ENCODE measurements at regions of chr11 and their contacts with region 1.

Region 1: DNA sequence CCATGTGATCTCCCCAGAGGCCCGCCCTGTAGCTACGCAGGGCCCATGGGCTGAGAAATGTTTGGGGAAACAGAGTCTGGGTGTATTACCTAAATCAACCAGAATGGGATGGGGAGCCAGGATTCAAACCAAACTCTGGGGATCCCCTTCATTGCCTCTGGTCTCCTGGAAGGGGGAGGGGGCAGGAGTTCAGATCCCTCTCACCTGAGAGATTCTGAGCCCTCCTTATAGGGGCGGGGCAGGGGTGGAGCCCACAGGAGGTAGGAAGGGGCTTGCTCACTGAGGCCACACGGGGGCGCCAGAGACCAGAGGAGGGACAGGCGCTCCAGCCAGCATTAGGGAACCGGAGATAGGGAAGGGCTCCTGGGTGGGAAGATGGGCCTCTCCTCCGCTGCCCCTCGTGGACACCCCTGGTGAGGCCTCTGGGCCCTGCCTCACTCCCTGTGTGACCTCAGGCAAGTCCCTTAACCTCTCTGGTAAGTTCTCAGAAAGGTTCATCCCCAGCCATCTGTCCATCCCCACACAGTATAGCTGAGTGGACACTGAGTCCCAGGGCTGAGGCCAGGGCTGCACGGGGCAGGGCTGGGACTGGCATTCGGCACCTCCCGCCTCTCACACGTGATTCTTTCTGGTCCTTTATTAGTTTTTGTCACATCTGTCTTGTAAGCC is 2.7 kb upstream of the CDC42BPG start:
- DNase-seq: peak; percentile 85 to 94 (median 90)
- H3K4me3 ChIP-seq: no peak overlapping the region
- H3K4me3 Mint-ChIP-seq: peak overlapping the region in 5 of 7 donors; percentile 33 to 81 (median 47)
- H3K27ac ChIP-seq: no peak overlapping the region
- H3K27ac Mint-ChIP-seq: peak overlapping the region; percentile 26 to 84 (median 75)
- H3K4me1 ChIP-seq: peaks cover 62% of the 10 kb centered on the region
- H3K4me1 Mint-ChIP-seq: peaks cover 52 to 68% (median 62%) of the 10 kb centered on the region in 3 donors
- H3K27me3 ChIP-seq: no peaks in the 10 kb centered on the region
- H3K27me3 Mint-ChIP-seq: no peaks in the 10 kb centered on the region

Region 2: DNA sequence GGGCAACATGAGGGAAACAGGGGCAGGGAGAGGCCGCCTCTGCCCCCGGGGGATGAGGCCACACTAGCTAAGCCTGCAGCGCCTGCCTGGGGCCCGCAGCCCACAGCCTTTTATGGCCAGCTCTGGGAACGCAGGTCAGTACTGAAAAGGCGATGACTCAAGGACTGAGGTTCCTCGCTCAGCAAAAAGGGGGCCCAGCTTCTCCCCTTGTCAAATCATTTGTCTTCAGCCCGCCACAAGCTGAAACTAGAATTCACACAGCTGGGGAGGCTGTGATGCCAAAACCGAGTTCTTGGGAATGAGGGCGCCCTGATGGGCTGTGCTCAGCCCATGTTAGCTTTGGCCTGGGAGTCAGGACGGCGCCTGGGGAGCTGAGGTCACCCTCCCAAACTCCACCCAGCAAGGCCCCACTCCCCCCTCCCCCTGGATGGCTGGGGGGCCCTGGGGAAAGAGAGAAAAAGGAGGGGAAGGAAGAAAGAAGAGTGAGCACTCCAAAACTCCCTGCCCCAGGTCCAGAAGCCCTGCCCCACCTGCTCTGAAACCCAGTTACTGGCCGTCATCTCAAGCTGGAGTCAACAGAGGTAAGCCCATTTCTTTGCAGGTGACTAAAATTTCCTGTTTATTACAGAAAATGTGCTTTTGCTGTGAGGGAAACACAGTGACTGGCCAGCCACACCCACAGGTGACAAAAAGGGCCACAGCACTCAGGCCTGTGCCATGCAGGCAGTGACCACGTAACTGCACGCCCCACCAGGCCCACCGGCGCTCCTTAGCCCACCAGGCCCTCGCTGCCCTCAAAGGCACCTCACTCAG is 17.5 kb after region 1 on chr11:
- CTCF ChIA-PET with region 1: interaction called, 318 read pairs
- POLR2A ChIA-PET with region 1: interaction called, 213 read pairs
- DNase-seq: no peak
- H3K4me3 ChIP-seq: peak overlapping the region; percentile 66
- H3K4me3 Mint-ChIP-seq: peak overlapping the region; percentile 76 to 91 (median 78)
- H3K27ac ChIP-seq: peak overlapping the region; percentile 75
- H3K27ac Mint-ChIP-seq: peak overlapping the region; percentile 80 to 99 (median 96)
- H3K4me1 ChIP-seq: peaks cover 100% of the 10 kb centered on the region
- H3K4me1 Mint-ChIP-seq: peaks cover 84 to 95% (median 91%) of the 10 kb centered on the region in 3 donors
- H3K27me3 ChIP-seq: no peaks in the 10 kb centered on the region
- H3K27me3 Mint-ChIP-seq: peaks cover 0 to 1% of the 10 kb centered on the region in 2 donors

Region 3: GRCh38 chr11:64878494-64879243 is 31.5 kb after region 1 on chr11 and contains the start of gene EHD1:
- CTCF ChIA-PET with region 1: interaction called, 1,256 read pairs
- POLR2A ChIA-PET with region 1: interaction called, 569 read pairs
- DNase-seq: peak; percentile 99 to 100 (median 100)
- H3K4me3 ChIP-seq: peak within 1 kb of the TSS; percentile 99
- H3K4me3 Mint-ChIP-seq: peak within 1 kb of the TSS; percentile 98 to 100 (median 99)
- H3K27ac ChIP-seq: peak within 1 kb of the TSS; percentile 86
- H3K27ac Mint-ChIP-seq: peak within 1 kb of the TSS; percentile 91 to 99 (median 98)
- H3K4me1 ChIP-seq: peaks cover 58% of the 10 kb centered on the region
- H3K4me1 Mint-ChIP-seq: peaks cover 59 to 67% (median 62%) of the 10 kb centered on the region in 3 donors
- H3K27me3 ChIP-seq: no peaks in the 10 kb centered on the region
- H3K27me3 Mint-ChIP-seq: peaks cover 0 to 10% of the 10 kb centered on the region in 2 donors
- total RNA-seq, gene EHD1: 102 to 110 TPM

Region 4: DNA sequence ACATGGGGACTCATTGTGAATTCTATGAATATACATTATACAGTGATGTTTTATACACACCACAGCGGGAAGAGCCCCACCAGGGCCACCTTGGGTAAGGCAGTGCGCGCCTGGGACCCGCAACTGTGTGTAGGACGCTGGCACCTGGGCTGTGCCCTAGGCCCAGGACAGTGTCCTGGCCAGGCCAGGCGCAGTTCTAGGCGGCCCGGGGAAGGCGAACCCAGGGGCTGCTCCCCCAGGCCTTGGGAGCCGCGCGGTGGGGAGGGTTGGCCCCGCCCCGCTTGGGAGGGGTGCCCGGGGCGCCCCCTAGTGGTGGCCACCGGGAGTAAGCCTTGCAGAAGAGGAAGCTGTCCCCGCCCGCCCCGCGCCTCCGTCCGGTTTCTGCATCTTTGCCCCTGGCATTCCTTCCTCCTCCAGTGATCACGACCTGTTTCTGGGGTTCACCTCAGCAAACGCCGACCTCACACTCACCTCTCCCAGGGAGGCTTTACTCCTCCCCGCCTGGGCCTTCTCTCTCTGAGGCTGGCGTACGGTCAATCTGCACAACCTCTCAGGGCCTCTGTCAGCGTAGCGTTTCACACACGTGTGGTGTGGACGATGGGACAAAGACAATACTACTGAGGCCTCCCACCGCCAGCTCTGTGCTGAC is 40.7 kb after region 1 on chr11:
- CTCF ChIA-PET with region 1: interaction called, 1,256 read pairs
- POLR2A ChIA-PET with region 1: interaction called, 569 read pairs
- DNase-seq: peak; percentile 78 to 89 (median 84)
- H3K4me3 ChIP-seq: peak overlapping the region; percentile 60
- H3K4me3 Mint-ChIP-seq: peak overlapping the region; percentile 35 to 87 (median 78)
- H3K27ac ChIP-seq: peak overlapping the region; percentile 75
- H3K27ac Mint-ChIP-seq: peak overlapping the region in 7 of 8 donors; percentile 26 to 95 (median 85)
- H3K4me1 ChIP-seq: peaks cover 29% of the 10 kb centered on the region
- H3K4me1 Mint-ChIP-seq: peaks cover 24 to 41% (median 24%) of the 10 kb centered on the region in 3 donors
- H3K27me3 ChIP-seq: no peaks in the 10 kb centered on the region
- H3K27me3 Mint-ChIP-seq: no peaks in the 10 kb centered on the region

Region 5: DNA sequence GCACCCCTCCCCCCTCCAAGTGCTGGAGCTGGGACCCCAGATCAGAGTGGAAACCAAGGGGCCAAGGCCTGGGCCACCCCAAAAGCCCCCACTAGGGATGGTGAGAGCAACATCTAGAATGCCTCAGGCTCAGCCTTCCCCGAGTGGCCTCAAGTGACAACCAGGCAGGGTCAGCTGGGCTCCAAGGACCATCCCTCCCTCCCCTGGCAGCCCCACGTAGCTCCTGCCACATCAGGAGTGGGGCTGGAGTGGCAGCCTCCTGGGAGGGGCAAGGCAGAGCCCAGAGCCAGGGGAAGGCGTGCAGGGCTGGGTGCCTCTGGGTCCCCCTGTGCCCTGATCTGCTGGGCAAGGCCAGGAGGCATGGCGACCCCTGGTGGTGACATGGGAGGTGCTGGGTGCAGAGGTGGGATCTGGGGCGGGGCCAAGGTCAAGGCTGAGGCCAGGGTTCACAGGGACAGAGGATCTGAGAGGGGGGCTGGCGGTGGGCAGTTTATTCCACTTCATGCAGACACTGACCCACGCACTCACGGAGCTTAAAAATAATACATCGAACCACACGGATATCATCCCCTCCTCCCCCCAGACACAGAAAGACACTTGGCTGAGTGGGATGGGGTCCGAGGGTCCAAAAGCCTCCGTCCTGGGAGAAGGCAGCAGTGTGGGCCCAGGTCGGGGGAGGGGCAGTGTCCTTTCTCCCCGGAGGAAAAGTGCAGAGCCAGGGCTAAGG is 47.1 kb after region 1 on chr11:
- CTCF ChIA-PET with region 1: interaction called, 1,256 read pairs
- POLR2A ChIA-PET with region 1: interaction called, 19 read pairs
- DNase-seq: peak; percentile 82 to 93 (median 87)
- H3K4me3 ChIP-seq: no peak overlapping the region
- H3K4me3 Mint-ChIP-seq: no peak overlapping the region
- H3K27ac ChIP-seq: no peak overlapping the region
- H3K27ac Mint-ChIP-seq: peak overlapping the region in 2 of 8 donors; percentile 20 to 22
- H3K4me1 ChIP-seq: no peaks in the 10 kb centered on the region
- H3K4me1 Mint-ChIP-seq: peaks cover 0 to 4% (median 2%) of the 10 kb centered on the region in 3 donors
- H3K27me3 ChIP-seq: no peaks in the 10 kb centered on the region
- H3K27me3 Mint-ChIP-seq: no peaks in the 10 kb centered on the region